ENCODE measurements at regions of chr16 and their contacts with region 1.

Region 1: GRCh38 chr16:22297114-22297878 is at the start of gene POLR3E:
- DNase-seq: peak; percentile 99
- ATAC-seq: peak; percentile 93 to 97 (median 94)
- H3K4me3 ChIP-seq: peak within 1 kb of the TSS; percentile 76 to 94 (median 91)
- H3K27ac ChIP-seq: peak within 1 kb of the TSS; percentile 84 to 99 (median 93)
- H3K4me1 ChIP-seq: peaks cover 0 to 7% (median 0%) of the 10 kb centered on the region in 4 donors
- H3K27me3 ChIP-seq: no peaks in the 10 kb centered on the region
- CTCF ChIP-seq: peak; percentile 95 to 99 (median 96)
- POLR2A ChIP-seq: peak; percentile 85
- total RNA-seq, gene POLR3E: 15.8 to 35.7 (median 26.9) TPM

Region 2: GRCh38 chr16:22203091-22203490 is 94.2 kb before region 1 on chr16:
- intact Hi-C with region 1: loop called in 1 of 2 experiments (anchors 5 kb)
- DNase-seq: no peak
- ATAC-seq: no peak
- H3K4me3 ChIP-seq: no peak overlapping the region
- H3K27ac ChIP-seq: no peak overlapping the region
- H3K4me1 ChIP-seq: peaks cover 0 to 13% (median 4%) of the 10 kb centered on the region in 4 donors
- H3K27me3 ChIP-seq: no peaks in the 10 kb centered on the region
- CTCF ChIP-seq: no peak
- POLR2A ChIP-seq: no peak

Region 3: DNA sequence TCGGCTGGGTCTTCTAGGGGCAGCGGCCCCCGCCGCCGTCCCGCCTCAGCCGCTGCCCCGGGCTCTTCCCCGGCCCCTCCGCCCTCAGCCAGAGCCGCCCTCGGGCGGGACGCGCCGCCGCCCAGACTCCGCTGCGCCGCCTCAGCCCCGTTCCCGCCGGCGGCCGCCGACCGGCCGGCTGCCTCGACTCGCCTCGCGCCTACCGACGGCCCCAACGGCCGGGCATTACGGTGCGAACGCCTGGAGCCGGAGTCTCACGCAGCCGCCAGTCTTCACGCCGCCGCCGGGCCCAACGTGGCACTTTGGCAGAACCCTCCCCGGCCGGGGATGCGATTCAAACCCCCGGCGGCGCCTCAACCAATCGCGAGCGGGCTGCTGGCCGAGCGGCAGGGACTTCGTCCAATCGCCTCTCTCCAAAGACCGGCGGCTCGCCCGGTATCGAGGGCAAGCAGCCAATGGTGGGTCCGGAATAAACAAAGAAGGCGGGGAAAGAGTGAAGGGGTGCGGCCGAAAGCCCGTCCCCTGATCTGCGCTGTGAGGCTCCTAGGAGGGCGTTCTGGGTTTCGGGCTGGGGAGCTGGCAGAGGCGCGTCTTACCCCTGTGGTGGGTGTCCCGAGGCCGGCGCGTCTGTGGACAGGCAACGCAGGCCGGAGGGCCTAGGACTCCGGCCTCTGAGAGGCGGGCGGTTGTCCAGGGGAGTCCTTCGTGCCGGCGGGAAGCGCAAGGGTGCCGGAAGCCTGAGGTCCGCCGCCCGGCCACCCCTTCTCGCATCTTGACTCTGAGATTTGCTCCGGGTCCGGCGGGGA is 77.2 kb after region 1 on chr16 and contains the start of gene CDR2:
- intact Hi-C with region 1: no loop called
- DNase-seq: peak; percentile 98 to 99 (median 99)
- ATAC-seq: peak; percentile 83 to 92 (median 90)
- H3K4me3 ChIP-seq: peak within 1 kb of the TSS; percentile 86 to 92 (median 92)
- H3K27ac ChIP-seq: peak within 1 kb of the TSS; percentile 83 to 97 (median 91)
- H3K4me1 ChIP-seq: peaks cover 0 to 37% (median 10%) of the 10 kb centered on the region in 4 donors
- H3K27me3 ChIP-seq: no peaks in the 10 kb centered on the region
- CTCF ChIP-seq: no peak
- POLR2A ChIP-seq: peak; percentile 97
- total RNA-seq, gene CDR2: 8.2 to 16.8 (median 14.2) TPM

Measured in right lobe of liver (tissue), 6 donors.